Transverse colon (tissue), 4 donors: ENCODE measurements at regions of chr17 and their contacts with region 1.

Region 1: DNA sequence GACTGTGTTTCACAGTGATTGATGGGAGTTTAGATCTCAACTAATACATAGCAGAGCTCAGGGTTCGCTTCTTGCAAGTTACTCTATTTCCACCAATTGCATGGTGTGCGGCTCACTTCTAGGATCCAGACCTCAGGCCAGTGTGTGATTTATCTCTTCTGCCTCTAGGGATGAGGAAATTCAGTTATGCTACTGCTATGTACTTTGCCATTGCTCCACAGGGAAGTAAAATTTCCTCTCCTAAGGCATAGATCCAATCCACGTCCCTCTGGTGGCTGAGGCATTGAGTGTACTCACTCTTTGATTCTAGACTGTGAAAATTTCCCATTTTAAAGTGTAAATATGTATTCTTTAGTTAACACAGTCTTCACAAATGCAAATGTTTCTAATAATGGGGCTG is 214.1 kb downstream of the HS3ST3B1 start:
- DNase-seq: no peak
- H3K4me3 ChIP-seq: no peak overlapping the region
- H3K27ac ChIP-seq: no peak overlapping the region
- H3K4me1 ChIP-seq: no peaks in the 10 kb centered on the region
- H3K27me3 ChIP-seq: no peaks in the 10 kb centered on the region
- CTCF ChIP-seq: no peak
- EP300 ChIP-seq: no peak
- POLR2A ChIP-seq: no peak

Region 2: GRCh38 chr17:14398766-14399165 is 116.2 kb before region 1 on chr17:
- in situ Hi-C with region 1: no loop called
- intact Hi-C with region 1: no loop called
- DNase-seq: no peak
- H3K4me3 ChIP-seq: no peak overlapping the region
- H3K27ac ChIP-seq: no peak overlapping the region
- H3K4me1 ChIP-seq: no peaks in the 10 kb centered on the region
- H3K27me3 ChIP-seq: no peaks in the 10 kb centered on the region
- CTCF ChIP-seq: no peak
- EP300 ChIP-seq: no peak
- POLR2A ChIP-seq: no peak

Region 3: GRCh38 chr17:14559264-14560119 is 44.5 kb after region 1 on chr17:
- in situ Hi-C with region 1: loop called in 1 of 4 experiments (anchors 10 kb)
- intact Hi-C with region 1: no loop called
- DNase-seq: no peak
- H3K4me3 ChIP-seq: no peak overlapping the region
- H3K27ac ChIP-seq: no peak overlapping the region
- H3K4me1 ChIP-seq: no peaks in the 10 kb centered on the region
- H3K27me3 ChIP-seq: no peaks in the 10 kb centered on the region
- CTCF ChIP-seq: no peak
- EP300 ChIP-seq: no peak
- POLR2A ChIP-seq: no peak